ENCODE measurements at regions of chr21 and their contacts with region 1.

Region 1: DNA sequence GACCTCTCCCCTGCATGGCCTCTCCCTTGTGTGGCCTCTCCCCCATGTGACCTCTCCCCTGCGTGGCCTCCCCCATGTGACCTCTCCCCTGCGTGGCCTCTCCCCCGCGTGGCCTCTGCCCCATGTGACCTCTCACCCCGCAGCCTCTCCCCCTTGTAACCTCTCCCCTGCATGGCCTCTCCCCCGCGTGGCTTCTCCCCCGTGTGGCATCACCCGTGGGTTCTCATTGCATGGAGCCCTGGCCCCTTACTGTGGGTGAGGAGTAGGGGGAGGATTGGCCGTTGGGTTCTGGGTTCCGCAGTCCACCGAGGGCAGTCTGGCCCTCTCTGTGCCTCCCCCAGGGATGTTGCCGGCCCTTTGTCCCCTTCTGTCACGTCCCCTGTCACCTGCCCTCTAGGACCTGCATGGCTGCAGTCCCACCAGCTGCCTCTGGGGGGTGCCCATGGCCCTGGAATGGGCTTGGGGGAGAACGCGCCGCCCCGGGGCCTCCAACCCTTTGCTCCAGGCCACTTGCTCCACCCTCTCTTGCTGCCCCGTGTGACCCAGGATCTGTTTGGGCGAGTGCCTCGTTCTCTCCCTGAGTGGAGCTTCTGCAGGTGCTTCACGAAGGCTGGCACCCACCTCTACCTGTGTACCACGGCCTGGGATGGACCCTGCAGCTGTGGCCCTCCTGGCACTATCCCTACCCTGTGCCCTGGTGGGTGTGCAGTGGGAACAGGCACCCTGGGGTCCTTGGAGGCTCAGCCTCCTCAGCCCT is 21.3 kb downstream of the RRP1 start:
- DNase-seq: peak; percentile 56
- H3K4me3 ChIP-seq: no peak overlapping the region
- H3K27ac ChIP-seq: no peak overlapping the region
- H3K4me1 ChIP-seq: peaks cover 19% of the 10 kb centered on the region
- H3K27me3 ChIP-seq: no peaks in the 10 kb centered on the region
- CTCF ChIP-seq: peak; percentile 94
- POLR2A ChIP-seq: no peak

Region 2: DNA sequence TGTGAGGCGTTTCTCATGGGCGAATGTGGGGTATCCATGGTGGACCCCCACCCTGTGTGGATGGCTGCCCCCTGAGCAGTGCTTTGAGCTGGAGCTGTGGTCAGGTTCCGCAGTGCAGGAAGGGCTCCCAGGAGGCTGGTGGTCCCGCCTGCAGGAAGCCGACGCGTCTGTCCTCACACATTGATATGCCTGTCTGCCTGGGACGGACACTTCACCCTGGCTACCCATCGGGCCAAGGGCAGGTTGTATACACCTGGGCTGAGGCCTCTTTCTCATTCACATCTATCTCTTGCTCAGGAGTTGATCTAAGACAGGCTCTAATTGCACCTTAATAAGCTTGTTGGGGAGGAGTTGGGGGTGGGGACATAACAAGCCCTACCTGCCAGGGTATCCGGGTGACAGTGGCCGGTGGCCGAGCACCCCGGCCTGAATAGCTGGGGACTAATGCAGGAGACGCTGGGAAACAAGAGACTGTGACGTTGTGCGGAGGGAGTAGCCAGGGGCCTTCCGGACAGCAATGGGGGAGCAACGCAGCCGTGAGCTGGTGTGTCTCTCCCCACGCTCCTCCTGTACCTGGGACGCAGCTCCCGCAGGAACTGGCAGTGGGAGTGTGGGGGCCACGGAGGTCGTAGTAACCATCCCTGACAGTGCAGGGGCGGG is 70.1 kb before region 1 on chr21:
- CTCF ChIA-PET with region 1: no interaction called
- POLR2A ChIA-PET with region 1: no interaction called
- dilution Hi-C with region 1: no loop called
- intact Hi-C with region 1: no loop called
- DNase-seq: no peak
- H3K4me3 ChIP-seq: no peak overlapping the region
- H3K27ac ChIP-seq: no peak overlapping the region
- H3K4me1 ChIP-seq: no peaks in the 10 kb centered on the region
- H3K27me3 ChIP-seq: no peaks in the 10 kb centered on the region
- CTCF ChIP-seq: no peak
- POLR2A ChIP-seq: no peak

Region 3: GRCh38 chr21:43825681-43826622 is 15.3 kb after region 1 on chr21:
- CTCF ChIA-PET with region 1: interaction called, 10 read pairs
- POLR2A ChIA-PET with region 1: no interaction called
- dilution Hi-C with region 1: no loop called
- intact Hi-C with region 1: no loop called
- DNase-seq: no peak
- H3K4me3 ChIP-seq: no peak overlapping the region
- H3K27ac ChIP-seq: no peak overlapping the region
- H3K4me1 ChIP-seq: no peaks in the 10 kb centered on the region
- H3K27me3 ChIP-seq: peaks cover 0 to 3% of the 10 kb centered on the region in 2 experiments
- CTCF ChIP-seq: peak; percentile 16 to 22
- POLR2A ChIP-seq: no peak

Region 4: GRCh38 chr21:43835861-43836260 is 25.2 kb after region 1 on chr21:
- CTCF ChIA-PET with region 1: no interaction called
- POLR2A ChIA-PET with region 1: interaction called, 10 read pairs
- dilution Hi-C with region 1: no loop called
- intact Hi-C with region 1: no loop called
- DNase-seq: no peak
- H3K4me3 ChIP-seq: no peak overlapping the region
- H3K27ac ChIP-seq: no peak overlapping the region
- H3K4me1 ChIP-seq: no peaks in the 10 kb centered on the region
- H3K27me3 ChIP-seq: peaks cover 0 to 6% of the 10 kb centered on the region in 2 experiments
- CTCF ChIP-seq: no peak
- POLR2A ChIP-seq: no peak

Region 5: DNA sequence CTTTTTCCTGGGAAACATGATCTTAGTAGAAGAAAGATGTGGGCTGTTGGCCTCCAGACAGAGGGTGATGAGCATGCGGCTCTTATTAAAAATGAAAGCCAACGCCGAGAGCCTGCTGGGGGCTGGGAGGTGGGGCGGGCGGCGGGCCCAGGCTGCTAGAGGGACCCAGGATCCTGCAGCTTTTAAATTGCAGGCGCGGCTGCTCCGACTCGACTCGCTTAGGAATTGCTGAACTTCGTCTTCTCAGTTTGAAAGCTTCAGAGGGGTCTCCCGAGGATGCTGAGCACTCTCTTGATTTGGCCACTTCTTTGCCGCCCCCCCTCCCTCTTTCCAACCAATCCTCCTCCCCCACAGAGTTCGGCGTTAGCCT is 55.6 kb after region 1 on chr21:
- CTCF ChIA-PET with region 1: no interaction called
- POLR2A ChIA-PET with region 1: no interaction called
- dilution Hi-C with region 1: no loop called
- intact Hi-C with region 1: loop called (anchors 5 kb)
- DNase-seq: no peak
- H3K4me3 ChIP-seq: peak overlapping the region; percentile 88 to 94 (median 92)
- H3K27ac ChIP-seq: peak overlapping the region; percentile 41
- H3K4me1 ChIP-seq: peaks cover 15% of the 10 kb centered on the region
- H3K27me3 ChIP-seq: no peaks in the 10 kb centered on the region
- CTCF ChIP-seq: no peak
- POLR2A ChIP-seq: no peak

Region 6: DNA sequence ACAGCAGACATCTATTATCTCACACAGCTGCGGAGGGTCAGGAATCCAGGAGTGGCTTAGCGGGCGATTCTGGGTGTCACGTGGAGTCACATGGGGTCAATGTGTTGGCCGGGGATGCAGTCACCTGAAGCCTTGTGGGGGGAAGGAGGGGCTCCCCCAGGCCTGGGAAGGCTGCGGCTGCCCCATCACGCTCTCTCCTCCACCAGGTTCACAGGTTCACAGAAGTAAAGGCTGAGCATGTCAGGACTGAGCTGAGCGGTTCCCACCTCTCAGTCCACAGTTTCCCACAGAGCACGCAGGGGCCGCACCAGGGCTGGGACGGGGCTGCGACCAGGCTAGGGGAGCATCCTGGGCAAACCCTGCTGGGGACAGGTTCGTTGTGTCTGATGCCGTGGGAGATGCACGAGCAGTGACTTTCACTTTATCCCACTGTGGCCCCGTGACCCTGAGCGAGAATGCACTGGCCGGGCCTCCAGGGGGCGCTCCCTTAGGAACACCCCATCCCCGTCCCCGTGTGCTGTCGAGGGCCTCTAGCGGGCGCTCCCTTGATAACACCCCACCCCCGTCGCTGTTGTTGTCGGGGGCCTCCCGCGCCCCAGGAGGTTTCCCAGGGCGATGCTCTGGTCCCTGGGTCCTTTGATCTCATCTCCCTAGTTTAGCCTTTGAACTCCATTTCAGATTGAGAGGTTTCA is 128.2 kb after region 1 on chr21:
- CTCF ChIA-PET with region 1: interaction called, 41 read pairs
- POLR2A ChIA-PET with region 1: no interaction called
- dilution Hi-C with region 1: no loop called
- intact Hi-C with region 1: loop called (anchors 1 kb)
- DNase-seq: peak; percentile 68
- H3K4me3 ChIP-seq: peak overlapping the region; percentile 20 to 59 (median 27)
- H3K27ac ChIP-seq: peak overlapping the region; percentile 42
- H3K4me1 ChIP-seq: peaks cover 5% of the 10 kb centered on the region
- H3K27me3 ChIP-seq: no peaks in the 10 kb centered on the region
- CTCF ChIP-seq: peak; percentile 99 to 100
- POLR2A ChIP-seq: no peak

Region 7: DNA sequence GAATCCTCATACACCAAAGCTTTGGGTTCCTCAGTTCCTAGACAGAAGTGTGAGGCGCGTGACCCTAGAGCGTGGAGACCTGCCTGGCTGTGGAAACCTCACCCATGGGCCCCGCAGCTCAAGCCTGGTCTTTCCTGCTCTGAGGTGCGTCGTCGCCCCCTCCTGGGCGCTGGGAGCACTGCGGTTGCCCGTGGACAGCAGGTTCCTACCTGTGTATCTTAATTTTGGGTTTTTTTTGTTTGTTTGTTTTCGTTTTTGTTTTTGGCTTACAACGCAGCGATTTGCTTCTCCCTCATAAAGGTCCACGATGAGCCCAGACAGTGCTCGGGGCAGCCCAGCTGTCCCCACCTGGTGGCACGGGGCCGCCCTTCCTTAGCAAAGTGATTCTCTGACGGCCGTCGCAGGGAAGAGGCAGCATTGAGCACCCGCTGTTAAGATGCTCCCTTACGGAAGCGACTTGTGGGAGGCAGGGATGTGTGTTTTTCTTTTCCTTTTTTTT is 164.9 kb after region 1 on chr21:
- CTCF ChIA-PET with region 1: interaction called, 4 read pairs
- POLR2A ChIA-PET with region 1: no interaction called
- dilution Hi-C with region 1: no loop called
- intact Hi-C with region 1: loop called (anchors 1 kb)
- DNase-seq: peak; percentile 59
- H3K4me3 ChIP-seq: no peak overlapping the region
- H3K27ac ChIP-seq: no peak overlapping the region
- H3K4me1 ChIP-seq: no peaks in the 10 kb centered on the region
- H3K27me3 ChIP-seq: no peaks in the 10 kb centered on the region
- CTCF ChIP-seq: peak; percentile 96 to 97
- POLR2A ChIP-seq: no peak

Measured in endothelial cell of umbilical vein (primary cell).